K562 (cell line): ENCODE measurements at regions of chr7 and their contacts with region 1.

Region 1: DNA sequence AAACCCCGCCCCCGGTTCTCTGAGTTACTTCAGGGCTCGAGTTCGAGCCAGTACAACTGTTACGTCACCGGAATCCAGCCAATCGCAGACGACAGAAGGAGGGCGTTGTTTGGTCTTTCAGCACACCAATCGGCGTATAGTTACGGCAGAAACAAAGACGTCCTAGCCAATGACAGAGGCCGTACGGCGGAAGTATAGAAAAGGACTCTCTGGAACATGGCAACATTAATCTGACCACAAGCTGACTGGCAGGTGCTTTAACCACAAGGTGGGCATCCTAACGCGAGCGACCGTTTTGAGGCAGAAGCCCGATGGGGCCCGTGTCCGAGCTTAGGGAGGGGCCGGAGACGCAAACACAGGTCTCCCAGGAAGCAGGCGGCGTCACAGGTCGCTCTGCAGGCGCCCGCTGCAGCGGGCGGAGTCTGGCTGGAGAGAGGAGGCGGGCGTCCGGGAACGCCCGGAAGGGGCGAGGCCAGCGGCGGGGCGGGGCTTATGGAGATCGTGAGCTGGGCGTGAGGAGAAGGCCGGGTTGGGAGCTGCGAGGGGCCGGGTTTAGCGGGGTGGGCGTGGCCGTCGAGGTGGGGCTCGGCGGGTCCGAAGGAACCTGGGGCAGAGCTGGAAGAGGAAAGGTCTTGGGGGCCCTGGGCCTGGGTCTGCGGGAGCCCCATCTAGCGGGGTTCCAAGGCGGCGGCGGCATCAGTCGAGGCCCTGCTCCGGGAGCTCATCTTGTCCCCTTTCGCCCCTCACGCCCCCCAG is at the start of gene MOSPD3:
- DNase-seq: peak; percentile 99 to 100 (median 100)
- ATAC-seq: peak; percentile 98
- H3K4me3 ChIP-seq: peak within 1 kb of the TSS; percentile 52
- H3K27ac ChIP-seq: peak within 1 kb of the TSS; percentile 78
- H3K4me1 ChIP-seq: peaks cover 19 to 28% of the 10 kb centered on the region in 2 experiments; a peak in 4 of 5 replicates
- H3K27me3 ChIP-seq: no peaks in the 10 kb centered on the region
- CTCF ChIP-seq: 0 out of 6 replicates have a peak, but pooled peaks of 1 of the 3 experiments have one; percentile 1
- EP300 ChIP-seq: peak; percentile 25; the same call in 1 of the 2 replicates
- POLR2A ChIP-seq: peak; percentile 97
- RAD21 ChIP-seq: no peak; a peak in 1 of 4 replicates
- polyA plus RNA-seq, gene MOSPD3: 1.4 to 2.6 TPM

Region 2: GRCh38 chr7:100476903-100477870 is 135.0 kb before region 1 on chr7:
- CTCF ChIA-PET with region 1: no interaction called
- POLR2A ChIA-PET with region 1: no interaction called
- in situ Hi-C with region 1: no loop called
- intact Hi-C with region 1: no loop called
- DNase-seq: peak in 3 of 4 experiments; percentile 55 to 65 (median 65)
- ATAC-seq: peak; percentile 14
- H3K4me3 ChIP-seq: peak overlapping the region; percentile 86
- H3K27ac ChIP-seq: peak overlapping the region; percentile 82
- H3K4me1 ChIP-seq: peaks cover 44 to 77% of the 10 kb centered on the region in 2 experiments
- H3K27me3 ChIP-seq: no peaks in the 10 kb centered on the region
- CTCF ChIP-seq: peak; percentile 49 to 64 (median 58)
- EP300 ChIP-seq: no peak
- POLR2A ChIP-seq: no peak
- RAD21 ChIP-seq: no peak

Region 3: DNA sequence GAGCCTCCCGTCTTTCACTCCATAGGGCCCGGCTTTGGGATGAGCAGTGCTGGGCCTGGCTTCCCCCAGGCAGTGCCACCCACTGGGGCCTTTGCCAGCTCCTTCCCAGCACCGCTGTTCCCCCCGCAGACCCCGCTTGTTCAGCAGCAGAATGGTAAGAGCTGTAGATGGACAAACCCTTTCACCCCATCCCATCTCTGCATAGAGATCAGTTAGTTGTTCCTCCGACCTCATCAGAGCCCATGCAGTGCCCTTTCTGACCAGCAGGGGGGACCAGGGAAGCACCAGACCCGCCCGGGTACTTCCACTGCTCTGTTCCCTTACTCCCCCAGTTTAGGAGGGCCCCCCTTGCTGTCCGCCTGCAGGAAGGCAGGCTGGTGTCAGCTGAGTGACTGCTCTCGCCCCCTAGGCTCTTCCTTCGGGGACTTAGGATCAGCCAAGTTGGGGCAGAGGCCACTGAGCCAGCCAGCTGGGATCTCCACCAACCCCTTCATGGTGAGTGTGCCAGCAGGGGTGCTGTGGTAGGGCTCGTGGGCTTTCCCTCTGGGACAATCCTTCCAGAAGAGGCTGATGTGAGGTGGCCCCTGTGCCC is 48.2 kb before region 1 on chr7:
- CTCF ChIA-PET with region 1: no interaction called
- POLR2A ChIA-PET with region 1: no interaction called
- in situ Hi-C with region 1: no loop called
- intact Hi-C with region 1: no loop called
- DNase-seq: peak; percentile 87 to 94 (median 90)
- ATAC-seq: peak; percentile 82
- H3K4me3 ChIP-seq: no peak overlapping the region
- H3K27ac ChIP-seq: no peak overlapping the region
- H3K4me1 ChIP-seq: peaks cover 5 to 38% of the 10 kb centered on the region in 2 experiments; a peak in 4 of 5 replicates
- H3K27me3 ChIP-seq: no peaks in the 10 kb centered on the region
- CTCF ChIP-seq: peak; percentile 92 to 99 (median 96)
- EP300 ChIP-seq: no peak
- POLR2A ChIP-seq: no peak
- RAD21 ChIP-seq: peak; percentile 74 to 92

Region 4: GRCh38 chr7:100586266-100587025 is 25.7 kb before region 1 on chr7 and contains the start of gene FBXO24:
- CTCF ChIA-PET with region 1: no interaction called
- POLR2A ChIA-PET with region 1: interaction called, 11 read pairs
- in situ Hi-C with region 1: no loop called
- intact Hi-C with region 1: no loop called
- DNase-seq: peak; percentile 99 to 100 (median 100)
- ATAC-seq: peak; percentile 94
- H3K4me3 ChIP-seq: peak within 1 kb of the TSS; percentile 75
- H3K27ac ChIP-seq: peak within 1 kb of the TSS; percentile 88
- H3K4me1 ChIP-seq: peaks cover 26 to 66% of the 10 kb centered on the region in 2 experiments
- H3K27me3 ChIP-seq: no peaks in the 10 kb centered on the region
- CTCF ChIP-seq: peak in 1 of 3 experiments; percentile 31; a peak in 1 of 6 replicates
- EP300 ChIP-seq: no peak
- POLR2A ChIP-seq: no peak; the same call in none of the 2 replicates
- RAD21 ChIP-seq: no peak
- polyA plus RNA-seq, gene FBXO24: 0.17 to 0.27 TPM

Region 5: GRCh38 chr7:100626530-100627237 is 14.5 kb after region 1 on chr7:
- CTCF ChIA-PET with region 1: no interaction called
- POLR2A ChIA-PET with region 1: interaction called, 54 read pairs
- in situ Hi-C with region 1: no loop called
- intact Hi-C with region 1: no loop called
- DNase-seq: peak; percentile 92 to 99 (median 99)
- ATAC-seq: peak; percentile 96
- H3K4me3 ChIP-seq: peak overlapping the region; percentile 41; the same call in 1 of the 2 replicates
- H3K27ac ChIP-seq: peak overlapping the region; percentile 74; the same call in 2 of the 3 replicates
- H3K4me1 ChIP-seq: peaks cover 15 to 41% of the 10 kb centered on the region in 2 experiments
- H3K27me3 ChIP-seq: no peaks in the 10 kb centered on the region
- CTCF ChIP-seq: no peak
- EP300 ChIP-seq: no peak; the same call in 1 of the 2 replicates
- POLR2A ChIP-seq: peak; percentile 71; the same call in 1 of the 2 replicates
- RAD21 ChIP-seq: no peak